ENCODE measurements at regions of chr6 and their contacts with region 1.

Region 1: DNA sequence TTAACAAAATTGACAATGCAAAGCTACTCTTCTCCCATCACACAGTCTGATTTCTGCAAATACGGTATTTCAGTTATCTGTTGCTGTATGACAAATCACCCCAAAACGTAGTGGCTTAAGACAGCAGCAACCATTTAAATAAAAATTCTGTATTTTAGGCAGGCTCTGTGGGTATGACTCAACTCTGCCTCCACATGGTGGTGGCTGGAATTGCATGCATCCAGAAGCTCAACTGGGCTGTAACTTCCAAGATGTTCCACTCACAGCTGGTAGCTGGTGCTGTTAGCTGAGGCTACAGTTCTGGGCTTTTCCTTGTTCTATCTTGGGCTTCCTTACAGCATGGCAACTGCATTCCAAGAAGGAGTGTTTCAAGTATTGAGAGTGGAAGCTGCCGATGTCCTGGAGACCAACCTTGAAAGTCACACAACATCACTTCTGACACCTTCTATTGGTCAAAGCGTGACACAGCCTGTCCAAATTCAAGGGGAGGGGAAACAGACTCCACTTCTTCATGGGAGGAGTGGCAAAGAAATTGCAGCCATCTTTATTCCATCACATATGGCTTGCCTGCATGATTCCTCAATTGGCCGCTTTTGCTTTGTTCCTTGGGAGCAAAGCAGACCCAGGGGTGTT is 39.7 kb upstream of the TULP1 start:
- DNase-seq: peak; percentile 78
- H3K4me3 Mint-ChIP-seq: no peak overlapping the region
- H3K27ac Mint-ChIP-seq: no peak overlapping the region
- H3K4me1 Mint-ChIP-seq: no peaks in the 10 kb centered on the region
- H3K27me3 Mint-ChIP-seq: peaks cover 6% of the 10 kb centered on the region

Region 2: GRCh38 chr6:35522660-35523658 is 29.4 kb before region 1 on chr6:
- CTCF ChIA-PET with region 1: interaction called, 40 read pairs
- POLR2A ChIA-PET with region 1: interaction called, 3 read pairs
- intact Hi-C with region 1: loop called (anchors 1 kb)
- DNase-seq: peak; percentile 87
- H3K4me3 Mint-ChIP-seq: peak overlapping the region; percentile 67
- H3K27ac Mint-ChIP-seq: no peak overlapping the region
- H3K4me1 Mint-ChIP-seq: peaks cover 8% of the 10 kb centered on the region
- H3K27me3 Mint-ChIP-seq: no peaks in the 10 kb centered on the region

Region 3: GRCh38 chr6:35532126-35532525 is 20.3 kb before region 1 on chr6:
- CTCF ChIA-PET with region 1: interaction called, 10 read pairs
- POLR2A ChIA-PET with region 1: no interaction called
- intact Hi-C with region 1: no loop called
- DNase-seq: no peak
- H3K4me3 Mint-ChIP-seq: no peak overlapping the region
- H3K27ac Mint-ChIP-seq: no peak overlapping the region
- H3K4me1 Mint-ChIP-seq: no peaks in the 10 kb centered on the region
- H3K27me3 Mint-ChIP-seq: no peaks in the 10 kb centered on the region

Region 4: GRCh38 chr6:35569011-35569461 is 16.6 kb after region 1 on chr6:
- CTCF ChIA-PET with region 1: interaction called, 13 read pairs
- POLR2A ChIA-PET with region 1: no interaction called
- intact Hi-C with region 1: no loop called
- DNase-seq: peak; percentile 68
- H3K4me3 Mint-ChIP-seq: no peak overlapping the region
- H3K27ac Mint-ChIP-seq: no peak overlapping the region
- H3K4me1 Mint-ChIP-seq: peaks cover 2% of the 10 kb centered on the region
- H3K27me3 Mint-ChIP-seq: peaks cover 3% of the 10 kb centered on the region

Measured in activated CD4-positive, alpha-beta memory T cell treated with anti-CD3 and anti-CD28 coated beads for 36 hours (primary cell).